ENCODE measurements at regions of chr10 and their contacts with region 1.

Region 1: DNA sequence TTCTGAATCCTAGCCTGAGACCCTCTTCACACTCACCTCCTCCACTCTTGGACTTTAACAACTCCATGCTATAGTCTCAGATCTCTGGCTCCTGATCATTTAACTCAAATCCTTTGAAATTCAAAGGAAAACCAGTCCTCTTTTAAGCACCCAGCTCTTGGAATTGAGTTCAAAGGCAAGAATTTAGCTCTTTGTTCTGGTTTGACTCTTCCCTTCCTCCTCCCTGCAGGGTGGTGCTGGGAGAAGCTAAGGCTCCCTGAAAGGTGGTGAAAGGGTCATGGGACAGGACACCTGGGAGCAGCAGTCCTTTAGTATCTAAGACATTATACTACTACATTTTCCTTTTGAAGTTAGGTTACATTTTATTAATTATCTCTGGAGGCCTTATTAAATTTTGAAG is 259.4 kb downstream of the CCSER2 start:
- DNase-seq: no peak
- ATAC-seq: no peak
- H3K4me3 ChIP-seq: no peak overlapping the region
- H3K27ac ChIP-seq: no peak overlapping the region
- H3K4me1 ChIP-seq: no peaks in the 10 kb centered on the region
- H3K27me3 ChIP-seq: no peaks in the 10 kb centered on the region

Region 2: DNA sequence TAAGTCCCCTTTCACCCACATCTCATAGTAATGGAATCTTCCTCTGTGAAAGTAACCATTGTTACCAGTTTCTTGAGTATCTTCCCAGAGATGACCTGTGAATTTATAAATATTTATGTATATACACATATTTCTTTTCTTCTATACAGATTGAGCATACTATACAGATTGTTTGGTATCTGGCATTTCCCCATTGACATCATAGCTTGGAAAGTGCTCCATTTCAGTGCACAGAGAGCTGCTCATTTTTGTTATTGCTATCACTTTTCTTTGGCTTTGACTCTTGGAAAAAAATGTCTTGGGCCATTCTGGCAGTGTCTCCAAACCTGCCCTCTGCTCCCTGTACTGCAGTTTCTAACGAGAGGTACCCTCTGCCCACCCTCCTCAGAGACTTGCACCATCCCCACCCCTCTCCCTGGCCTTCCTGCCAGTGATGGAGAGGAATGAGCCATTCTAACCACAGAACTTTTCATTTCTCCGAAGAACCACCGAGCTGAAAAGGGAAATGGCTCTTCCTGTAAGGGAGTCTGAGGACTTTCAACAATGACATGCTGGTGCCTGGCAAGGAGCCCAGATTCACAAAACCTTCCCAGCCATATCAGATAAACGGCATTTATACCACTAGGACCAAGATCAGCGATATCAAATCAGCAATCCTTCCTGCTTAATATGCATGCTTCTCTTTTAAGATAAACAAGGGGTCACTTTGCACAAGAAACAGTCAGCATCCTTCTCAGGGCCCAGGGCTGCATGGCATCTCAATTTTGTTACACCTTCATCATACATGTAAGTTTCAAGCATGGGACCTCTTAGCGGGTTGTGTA is 279.1 kb before region 1 on chr10:
- intact Hi-C with region 1: loop called in 1 of 4 experiments (anchors 5 kb)
- DNase-seq: peak; percentile 56 to 72 (median 59)
- ATAC-seq: peak; percentile 70 to 80
- H3K4me3 ChIP-seq: no peak overlapping the region
- H3K27ac ChIP-seq: peak overlapping the region; percentile 33
- H3K4me1 ChIP-seq: no peaks in the 10 kb centered on the region
- H3K27me3 ChIP-seq: no peaks in the 10 kb centered on the region

Region 3: GRCh38 chr10:84548869-84549268 is 38.9 kb before region 1 on chr10:
- intact Hi-C with region 1: no loop called
- DNase-seq: no peak
- ATAC-seq: no peak
- H3K4me3 ChIP-seq: no peak overlapping the region
- H3K27ac ChIP-seq: no peak overlapping the region
- H3K4me1 ChIP-seq: no peaks in the 10 kb centered on the region
- H3K27me3 ChIP-seq: no peaks in the 10 kb centered on the region

Measured in right cardiac atrium (tissue), 5 donors.